ENCODE measurements at regions of chr10 and their contacts with region 1.

Region 1: GRCh38 chr10:32958085-32959005 is at the start of gene ITGB1:
- DNase-seq: peak; percentile 96
- H3K4me3 Mint-ChIP-seq: peak within 1 kb of the TSS; percentile 86
- H3K27ac Mint-ChIP-seq: peak within 1 kb of the TSS; percentile 92
- H3K4me1 Mint-ChIP-seq: peaks cover 32% of the 10 kb centered on the region
- H3K27me3 Mint-ChIP-seq: peaks cover 9% of the 10 kb centered on the region
- total RNA-seq, gene ITGB1: 50.5 and 57.5 TPM in 2 replicates

Region 2: DNA sequence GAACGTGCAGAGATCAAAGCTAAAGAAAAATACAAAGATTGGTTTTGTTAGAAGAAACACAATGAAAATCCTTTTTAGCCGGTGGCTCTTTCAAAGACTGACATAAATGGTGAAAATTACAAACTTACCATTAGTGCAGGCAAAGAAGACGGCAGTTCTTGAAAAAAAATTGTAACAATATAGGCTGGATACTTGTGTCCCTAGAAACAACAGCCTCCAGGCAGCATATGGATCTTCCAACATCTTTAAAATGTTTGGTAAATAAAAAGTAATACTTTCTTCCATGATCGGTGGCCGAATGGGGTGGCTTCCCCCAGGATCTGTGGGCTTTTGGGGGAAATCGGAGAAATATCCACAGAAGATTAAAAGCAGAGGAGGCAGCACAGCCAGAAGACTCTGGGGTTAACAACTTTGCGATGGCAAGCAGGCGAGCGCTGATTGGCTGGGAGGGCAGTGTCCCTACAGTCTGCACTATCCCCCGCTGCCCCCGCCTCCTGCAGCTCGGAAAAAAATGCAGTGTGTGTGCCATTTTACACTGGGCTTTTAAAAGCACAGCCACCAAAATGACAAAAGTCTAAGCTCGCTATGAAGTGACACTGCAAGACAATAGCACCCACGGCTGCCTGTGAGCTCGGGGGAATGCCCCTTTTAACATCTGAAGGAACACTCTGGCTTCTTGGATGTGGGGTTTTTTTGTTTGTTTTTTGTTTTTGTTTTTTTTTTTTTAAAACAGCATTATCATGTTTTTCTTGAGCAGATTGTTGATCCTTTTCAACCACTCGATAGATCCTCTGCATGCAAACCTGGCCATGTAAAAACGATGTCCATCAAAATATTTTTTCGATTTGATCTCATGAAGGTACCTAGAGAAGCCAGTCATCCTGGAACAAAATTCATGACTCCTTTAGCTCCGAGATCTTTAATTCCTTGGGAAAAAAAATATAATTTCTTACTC is 579.7 kb before region 1 on chr10:
- intact Hi-C with region 1: loop called (anchors 2 kb)
- DNase-seq: peak; percentile 97
- H3K4me3 Mint-ChIP-seq: no peak overlapping the region
- H3K27ac Mint-ChIP-seq: no peak overlapping the region
- H3K4me1 Mint-ChIP-seq: peaks cover 18% of the 10 kb centered on the region
- H3K27me3 Mint-ChIP-seq: no peaks in the 10 kb centered on the region

Region 3: DNA sequence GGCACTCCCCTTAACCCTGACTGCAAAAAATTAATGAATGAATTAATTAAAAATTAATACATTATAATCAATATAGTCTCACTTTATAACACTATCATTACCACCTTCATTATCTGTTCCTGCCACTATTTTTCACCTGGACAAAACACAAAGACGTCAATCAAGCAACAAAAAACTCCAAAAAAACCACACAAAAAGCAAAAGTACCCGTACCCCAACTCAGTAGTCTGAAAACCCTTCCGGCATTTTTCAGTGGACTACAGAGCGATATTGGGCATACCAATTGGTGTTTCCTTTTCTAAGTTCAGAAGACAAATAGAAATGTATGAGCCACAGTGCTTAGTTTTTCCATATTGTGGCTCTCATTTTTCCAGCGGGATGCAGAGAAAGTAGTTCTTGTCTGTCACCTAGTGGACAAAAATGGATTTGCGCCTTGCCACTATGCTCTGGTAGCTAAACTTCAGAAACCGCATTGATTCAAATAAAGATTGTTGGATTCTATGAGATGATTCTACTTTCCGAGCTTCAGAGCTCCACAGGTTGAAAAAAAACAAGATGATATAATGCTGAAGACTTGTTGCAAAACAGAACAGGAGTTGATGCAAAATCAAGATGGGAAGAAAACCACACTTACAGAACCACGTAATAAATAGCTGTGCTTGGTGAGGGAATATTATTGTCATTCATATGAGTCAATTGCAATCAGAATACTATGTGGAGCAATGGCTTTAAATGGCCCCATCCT is 50.3 kb after region 1 on chr10:
- intact Hi-C with region 1: loop called (anchors 1 kb)
- DNase-seq: peak; percentile 88
- H3K4me3 Mint-ChIP-seq: peak overlapping the region; percentile 79
- H3K27ac Mint-ChIP-seq: peak overlapping the region; percentile 45
- H3K4me1 Mint-ChIP-seq: peaks cover 19% of the 10 kb centered on the region
- H3K27me3 Mint-ChIP-seq: peaks cover 11% of the 10 kb centered on the region

Region 4: GRCh38 chr10:33143160-33143728 is 184.9 kb after region 1 on chr10:
- intact Hi-C with region 1: loop called (anchors 2 kb)
- DNase-seq: peak; percentile 79
- H3K4me3 Mint-ChIP-seq: peak overlapping the region; percentile 8
- H3K27ac Mint-ChIP-seq: peak overlapping the region; percentile 80
- H3K4me1 Mint-ChIP-seq: peaks cover 41% of the 10 kb centered on the region
- H3K27me3 Mint-ChIP-seq: peaks cover 2% of the 10 kb centered on the region

Region 5: GRCh38 chr10:34280599-34281374 is 1322.4 kb after region 1 on chr10:
- intact Hi-C with region 1: loop called (anchors 5 kb)
- DNase-seq: peak; percentile 61
- H3K4me3 Mint-ChIP-seq: peak overlapping the region; percentile 39
- H3K27ac Mint-ChIP-seq: peak overlapping the region; percentile 83
- H3K4me1 Mint-ChIP-seq: peaks cover 25% of the 10 kb centered on the region
- H3K27me3 Mint-ChIP-seq: peaks cover 4% of the 10 kb centered on the region

Measured in activated CD4-positive, alpha-beta T cell treated with anti-CD3 and anti-CD28 coated beads, Interleukin-2, amount 10 ng/mL, durations not matched to agents 24 days and 14 days (primary cell).